Mammary epithelial cell (primary cell): ENCODE measurements at regions of chr6 and their contacts with region 1.

Region 1: GRCh38 chr6:53159558-53159957 is 10.9 kb upstream of the GCM1 start:
- DNase-seq: peak; percentile 33
- H3K4me3 ChIP-seq: no peak overlapping the region
- H3K27ac ChIP-seq: no peak overlapping the region
- H3K4me1 ChIP-seq: no peaks in the 10 kb centered on the region
- H3K27me3 ChIP-seq: no peaks in the 10 kb centered on the region
- CTCF ChIP-seq: peak in 1 of 2 donors; percentile 21

Region 2: GRCh38 chr6:53375847-53376246 is 216.3 kb after region 1 on chr6:
- CTCF ChIA-PET with region 1: interaction called, 34 read pairs
- dilution Hi-C with region 1: no loop called
- in situ Hi-C with region 1: no loop called
- intact Hi-C with region 1: no loop called
- DNase-seq: no peak
- H3K4me3 ChIP-seq: no peak overlapping the region
- H3K27ac ChIP-seq: no peak overlapping the region
- H3K4me1 ChIP-seq: no peaks in the 10 kb centered on the region
- H3K27me3 ChIP-seq: peaks cover 4% of the 10 kb centered on the region
- CTCF ChIP-seq: no peak